ENCODE measurements at regions of chr9 and their contacts with region 1.

Region 1: DNA sequence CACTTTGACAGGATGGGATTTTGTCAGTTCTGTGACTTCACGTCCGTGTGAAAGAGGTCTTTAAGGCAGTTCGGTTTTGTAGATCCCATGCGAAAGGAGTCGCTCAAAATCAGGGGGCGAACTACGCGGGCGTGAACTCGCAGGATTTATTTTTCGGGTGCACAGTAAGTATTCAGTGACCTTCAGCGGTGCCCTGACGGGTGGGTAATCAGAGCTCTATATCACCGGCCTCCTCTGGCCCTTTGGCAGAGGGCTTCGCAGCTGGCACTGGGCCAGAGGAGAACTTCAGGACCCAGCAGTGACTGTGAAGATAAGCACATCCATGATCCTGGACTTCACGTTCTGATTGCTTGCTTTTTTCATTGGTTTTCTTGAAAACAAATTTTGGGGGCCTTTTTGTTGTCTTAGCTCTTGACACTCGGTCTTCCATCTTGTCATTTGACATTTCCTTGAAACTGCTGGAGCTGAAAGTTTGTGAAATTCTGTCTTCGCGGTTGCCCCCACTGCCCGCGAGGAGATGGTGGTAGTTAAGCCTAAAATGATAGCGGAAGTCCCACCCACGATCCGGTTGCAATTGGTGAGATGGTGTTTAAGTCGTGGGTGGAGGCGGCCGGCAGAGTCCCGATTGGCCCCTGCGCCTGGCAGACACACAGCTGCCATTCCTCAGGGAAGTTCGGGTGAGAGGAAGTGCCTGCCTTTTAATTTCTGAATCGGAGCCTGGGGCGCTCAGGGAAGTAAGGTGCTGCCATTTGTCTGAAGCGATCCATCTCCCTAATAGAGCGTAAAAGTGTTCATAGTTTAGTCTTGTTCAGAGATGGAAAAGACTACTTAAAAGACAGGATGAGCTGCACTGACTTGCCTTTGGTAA is at the start of gene FAM120AOS:
- DNase-seq: peak; percentile 77 to 94
- ATAC-seq: peak; percentile 73 to 89 (median 77)
- H3K4me3 ChIP-seq: peak within 1 kb of the TSS; percentile 91
- H3K4me3 Mint-ChIP-seq: peak within 1 kb of the TSS; percentile 96
- H3K27ac ChIP-seq: peak within 1 kb of the TSS; percentile 67
- H3K27ac Mint-ChIP-seq: peak within 1 kb of the TSS; percentile 94 to 96
- H3K4me1 ChIP-seq: peaks cover 26% of the 10 kb centered on the region
- H3K4me1 Mint-ChIP-seq: peaks cover 51 to 55% of the 10 kb centered on the region in 2 donors
- H3K27me3 ChIP-seq: no peaks in the 10 kb centered on the region
- H3K27me3 Mint-ChIP-seq: no peaks in the 10 kb centered on the region
- CTCF ChIP-seq: no peak
- total RNA-seq, gene FAM120AOS: 36.7 to 49.7 (median 45.3) TPM

Region 2: GRCh38 chr9:93095205-93096130 is 357.8 kb before region 1 on chr9:
- intact Hi-C with region 1: loop called (anchors 5 kb)
- DNase-seq: peak; percentile 100
- ATAC-seq: peak; percentile 82 to 93 (median 84)
- H3K4me3 ChIP-seq: peak overlapping the region; percentile 63
- H3K4me3 Mint-ChIP-seq: peak overlapping the region; percentile 85
- H3K27ac ChIP-seq: peak overlapping the region; percentile 98
- H3K27ac Mint-ChIP-seq: peak overlapping the region; percentile 91 to 92
- H3K4me1 ChIP-seq: peaks cover 73% of the 10 kb centered on the region
- H3K4me1 Mint-ChIP-seq: peaks cover 28 to 51% of the 10 kb centered on the region in 2 donors
- H3K27me3 ChIP-seq: no peaks in the 10 kb centered on the region
- H3K27me3 Mint-ChIP-seq: no peaks in the 10 kb centered on the region
- CTCF ChIP-seq: no peak

Region 3: DNA sequence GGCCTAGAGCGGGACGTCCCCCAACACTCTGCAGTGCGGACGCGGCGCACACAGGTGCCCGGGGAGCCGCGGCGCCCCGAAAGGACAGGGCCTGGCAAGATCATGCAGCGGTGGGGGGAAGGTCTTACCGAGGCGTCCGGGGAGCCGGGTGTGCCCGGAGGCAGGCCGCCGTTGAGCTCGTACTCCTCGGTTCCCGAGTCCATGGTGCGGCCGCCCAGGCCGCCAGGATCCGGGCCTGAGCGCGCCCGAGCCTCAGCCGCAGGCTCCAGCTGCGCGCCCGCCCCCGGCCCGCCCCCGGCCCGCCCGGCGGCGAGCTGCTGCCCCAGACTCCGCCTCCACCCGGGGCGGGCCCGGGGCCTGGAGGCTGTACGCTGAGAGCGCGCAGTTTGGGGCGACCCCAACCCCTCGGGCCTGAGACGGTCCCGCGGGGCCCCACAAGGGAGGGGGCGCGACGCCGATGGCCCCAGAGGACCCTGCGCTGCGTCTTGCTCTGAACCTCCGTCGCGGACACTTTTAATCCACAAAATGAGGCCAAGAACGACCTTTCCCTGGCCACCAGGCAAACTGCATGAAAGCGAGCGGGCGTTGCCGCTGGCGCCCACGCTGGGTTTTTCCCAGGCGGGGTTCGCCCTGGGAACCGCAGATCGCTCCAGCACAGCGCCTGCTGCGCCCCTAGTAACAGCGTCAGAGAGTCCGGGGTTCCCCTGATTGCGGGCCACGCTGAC is 319.1 kb before region 1 on chr9 and contains the start of gene NINJ1:
- intact Hi-C with region 1: loop called (anchors 10 kb)
- DNase-seq: peak; percentile 82 to 97
- ATAC-seq: peak; percentile 76 to 88 (median 79)
- H3K4me3 ChIP-seq: peak within 1 kb of the TSS; percentile 89
- H3K4me3 Mint-ChIP-seq: peak within 1 kb of the TSS; percentile 88
- H3K27ac ChIP-seq: peak within 1 kb of the TSS; percentile 89
- H3K27ac Mint-ChIP-seq: peak within 1 kb of the TSS; percentile 90 to 97
- H3K4me1 ChIP-seq: peaks cover 46% of the 10 kb centered on the region
- H3K4me1 Mint-ChIP-seq: peaks cover 27 to 31% of the 10 kb centered on the region in 2 donors
- H3K27me3 ChIP-seq: no peaks in the 10 kb centered on the region
- H3K27me3 Mint-ChIP-seq: peaks cover 0 to 5% of the 10 kb centered on the region in 2 donors
- CTCF ChIP-seq: no peak
- total RNA-seq, gene NINJ1: 87.3 to 121 (median 93.8) TPM

Region 4: GRCh38 chr9:93501406-93501805 is 48.1 kb after region 1 on chr9:
- intact Hi-C with region 1: loop called (anchors 5 kb)
- DNase-seq: peak in 1 of 2 donors; percentile 44
- ATAC-seq: peak in 2 of 3 donors; percentile 29 to 63
- H3K4me3 ChIP-seq: no peak overlapping the region
- H3K4me3 Mint-ChIP-seq: peak overlapping the region; percentile 87
- H3K27ac ChIP-seq: peak overlapping the region; percentile 24
- H3K27ac Mint-ChIP-seq: peak overlapping the region; percentile 88 to 92
- H3K4me1 ChIP-seq: peaks cover 19% of the 10 kb centered on the region
- H3K4me1 Mint-ChIP-seq: peaks cover 40 to 48% of the 10 kb centered on the region in 2 donors
- H3K27me3 ChIP-seq: no peaks in the 10 kb centered on the region
- H3K27me3 Mint-ChIP-seq: no peaks in the 10 kb centered on the region
- CTCF ChIP-seq: no peak

Region 5: DNA sequence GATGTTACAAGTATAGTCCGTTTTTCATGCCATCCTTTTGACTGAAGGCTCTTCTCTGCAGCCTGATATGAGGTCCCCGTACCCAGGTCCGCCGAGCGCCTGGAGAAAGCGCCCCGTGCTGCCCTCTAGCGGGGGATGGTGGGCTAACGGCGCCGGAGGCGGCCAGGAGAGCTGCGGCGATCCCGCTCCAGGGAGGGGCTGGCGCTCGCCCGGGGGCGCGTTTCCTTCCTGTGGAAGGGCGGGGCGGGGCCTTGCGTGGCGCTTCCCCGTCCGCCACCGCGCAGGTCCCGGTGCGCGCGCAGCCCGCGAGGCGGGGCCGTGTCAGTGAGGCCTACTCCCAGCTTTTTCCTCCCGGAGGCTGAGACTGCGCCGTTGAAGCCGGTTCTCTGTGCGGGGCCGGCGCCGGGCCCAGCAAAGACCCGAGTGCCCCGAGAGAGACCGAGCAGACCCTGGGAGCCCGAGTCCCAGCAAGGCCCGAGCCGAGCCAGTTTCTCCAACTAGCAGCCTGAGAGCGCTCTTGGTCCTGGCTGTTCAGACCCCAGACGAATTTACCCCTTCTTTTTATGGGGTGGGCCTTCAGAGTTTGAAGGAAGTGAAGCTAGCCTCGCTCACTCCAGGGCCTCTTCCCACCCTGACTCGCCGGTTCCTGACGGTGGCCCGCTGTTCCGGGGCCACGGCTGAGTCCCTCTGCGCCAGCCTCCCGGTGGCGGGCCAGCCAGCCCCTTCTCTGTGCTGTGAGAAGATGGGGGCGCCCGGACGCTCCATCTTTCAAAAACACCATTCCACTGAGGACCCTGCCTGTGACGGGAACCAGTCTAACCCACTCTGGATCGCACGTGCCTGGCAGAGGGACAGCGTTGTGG is 113.4 kb after region 1 on chr9:
- intact Hi-C with region 1: loop called (anchors 2 kb)
- DNase-seq: peak; percentile 98
- ATAC-seq: peak; percentile 98 to 100 (median 98)
- H3K4me3 ChIP-seq: peak overlapping the region; percentile 71
- H3K4me3 Mint-ChIP-seq: peak overlapping the region; percentile 90
- H3K27ac ChIP-seq: peak overlapping the region; percentile 94
- H3K27ac Mint-ChIP-seq: peak overlapping the region; percentile 87
- H3K4me1 ChIP-seq: peaks cover 17% of the 10 kb centered on the region
- H3K4me1 Mint-ChIP-seq: peaks cover 10 to 18% of the 10 kb centered on the region in 2 donors
- H3K27me3 ChIP-seq: no peaks in the 10 kb centered on the region
- H3K27me3 Mint-ChIP-seq: no peaks in the 10 kb centered on the region
- CTCF ChIP-seq: peak; percentile 88

Region 6: DNA sequence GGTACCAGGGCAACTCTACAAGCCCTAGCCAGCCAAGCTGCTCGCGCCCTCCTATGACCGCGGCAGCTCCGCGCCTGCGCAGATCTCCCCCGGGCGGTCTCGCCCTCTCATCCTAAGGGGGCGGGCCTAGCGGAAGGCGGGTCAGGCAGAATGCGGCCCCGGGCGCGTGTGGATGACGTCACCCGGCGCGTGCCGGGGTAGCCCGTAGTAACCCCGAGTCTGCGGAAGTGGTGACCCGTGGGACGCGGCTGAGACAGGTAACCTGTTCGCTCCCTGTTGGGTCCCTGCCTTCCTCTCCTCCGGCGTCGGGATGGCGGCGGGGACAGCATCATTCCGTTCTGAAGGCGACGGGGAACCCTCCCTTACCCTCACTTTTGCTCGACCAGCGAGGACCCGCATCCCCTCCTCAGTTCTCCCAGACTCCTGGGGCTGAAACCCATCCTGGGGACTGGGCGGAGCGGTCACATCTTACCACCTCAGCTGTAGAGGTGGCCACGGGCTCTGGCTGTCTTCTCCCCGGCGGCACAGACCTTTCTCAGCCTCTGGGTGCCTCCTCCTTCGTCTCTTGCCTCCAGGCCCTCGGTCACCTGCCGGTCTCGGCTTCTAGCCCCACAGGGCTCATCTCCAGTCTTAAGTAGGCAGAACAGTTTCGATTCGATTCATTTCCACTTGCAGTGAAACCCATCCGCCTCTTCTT is 1273.4 kb after region 1 on chr9 and contains the start of gene AOPEP:
- intact Hi-C with region 1: loop called (anchors 10 kb)
- DNase-seq: peak; percentile 99 to 100
- ATAC-seq: peak; percentile 95 to 99 (median 98)
- H3K4me3 ChIP-seq: peak within 1 kb of the TSS; percentile 93
- H3K4me3 Mint-ChIP-seq: peak within 1 kb of the TSS; percentile 96
- H3K27ac ChIP-seq: peak within 1 kb of the TSS; percentile 95
- H3K27ac Mint-ChIP-seq: peak within 1 kb of the TSS; percentile 95 to 99
- H3K4me1 ChIP-seq: peaks cover 11% of the 10 kb centered on the region
- H3K4me1 Mint-ChIP-seq: peaks cover 10 to 18% of the 10 kb centered on the region in 2 donors
- H3K27me3 ChIP-seq: no peaks in the 10 kb centered on the region
- H3K27me3 Mint-ChIP-seq: no peaks in the 10 kb centered on the region
- CTCF ChIP-seq: no peak
- total RNA-seq, gene AOPEP: 20.1 to 22.6 (median 20.6) TPM